ENCODE measurements at regions of chr7 and their contacts with region 1.

Region 1: DNA sequence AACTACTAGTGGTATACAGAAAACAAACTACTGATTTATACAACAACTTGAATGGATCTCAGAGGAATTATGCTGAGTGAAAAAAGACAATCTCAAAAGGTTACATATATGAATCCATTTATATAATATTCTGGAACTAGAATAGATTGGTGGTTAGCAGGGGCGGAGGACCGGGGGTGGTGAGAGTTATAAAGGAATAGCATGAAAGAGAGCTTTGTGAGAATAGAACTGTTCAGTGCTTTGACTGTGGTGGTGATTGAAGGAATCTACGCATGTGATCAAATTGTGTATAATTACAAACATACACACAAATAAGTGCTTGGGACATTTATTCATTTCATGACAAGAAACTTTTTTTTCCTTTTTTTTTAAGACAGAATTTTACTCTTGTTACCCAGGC is 19.6 kb downstream of the RAB19 start:
- DNase-seq: no peak
- ATAC-seq: no peak
- H3K4me3 ChIP-seq: no peak overlapping the region
- H3K4me3 Mint-ChIP-seq: no peak overlapping the region
- H3K27ac ChIP-seq: no peak overlapping the region
- H3K27ac Mint-ChIP-seq: no peak overlapping the region
- H3K4me1 ChIP-seq: no peaks in the 10 kb centered on the region
- H3K4me1 Mint-ChIP-seq: no peaks in the 10 kb centered on the region
- H3K27me3 ChIP-seq: no peaks in the 10 kb centered on the region
- H3K27me3 Mint-ChIP-seq: no peaks in the 10 kb centered on the region
- CTCF ChIP-seq: no peak

Region 2: DNA sequence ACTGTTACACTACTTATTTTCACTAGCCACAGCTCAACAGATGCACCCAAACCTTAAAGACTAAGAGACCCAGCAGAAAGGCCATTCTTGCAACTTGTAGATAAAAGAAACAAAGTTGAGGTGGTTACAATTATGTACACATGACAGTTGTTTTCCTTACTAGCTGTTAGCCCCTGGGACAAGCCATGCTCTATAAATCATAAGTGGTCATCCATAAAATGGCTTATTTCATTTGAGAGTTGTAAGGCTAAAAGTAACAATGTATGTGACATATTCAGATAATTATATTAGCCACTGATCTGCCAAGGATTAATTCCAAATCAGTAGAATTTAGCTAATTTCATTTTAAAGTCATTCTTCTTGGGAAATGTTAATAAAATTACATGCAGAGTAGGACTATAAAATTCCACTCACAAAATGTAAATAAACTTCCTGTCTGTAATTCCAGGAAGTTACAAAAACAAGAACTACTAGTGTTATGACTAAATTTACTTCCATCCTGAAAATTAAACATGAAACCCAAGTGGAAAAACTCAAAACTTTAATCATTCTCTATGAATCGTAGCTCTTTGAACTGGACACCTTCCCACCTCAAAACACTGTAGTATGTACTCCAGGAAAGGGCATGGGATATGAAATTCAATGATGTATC is 38.5 kb before region 1 on chr7:
- CTCF ChIA-PET with region 1: no interaction called
- POLR2A ChIA-PET with region 1: no interaction called
- intact Hi-C with region 1: loop called in 1 of 2 experiments (anchors 5 kb)
- DNase-seq: no peak
- ATAC-seq: no peak
- H3K4me3 ChIP-seq: no peak overlapping the region
- H3K4me3 Mint-ChIP-seq: no peak overlapping the region
- H3K27ac ChIP-seq: no peak overlapping the region
- H3K27ac Mint-ChIP-seq: no peak overlapping the region
- H3K4me1 ChIP-seq: peaks cover 8% of the 10 kb centered on the region
- H3K4me1 Mint-ChIP-seq: peaks cover 16% of the 10 kb centered on the region
- H3K27me3 ChIP-seq: no peaks in the 10 kb centered on the region
- H3K27me3 Mint-ChIP-seq: no peaks in the 10 kb centered on the region
- CTCF ChIP-seq: no peak